ENCODE measurements at regions of chr17 and their contacts with region 1.

Region 1: GRCh38 chr17:4709794-4710692 is at the start of gene ARRB2:
- DNase-seq: peak; percentile 97 to 99
- ATAC-seq: peak; percentile 94 to 97 (median 95)
- H3K4me3 ChIP-seq: peak within 1 kb of the TSS; percentile 12 to 85 (median 72)
- H3K27ac ChIP-seq: peak within 1 kb of the TSS in 9 of 10 donors; percentile 53 to 99 (median 80)
- H3K4me1 ChIP-seq: peaks cover 4 to 47% (median 13%) of the 10 kb centered on the region in 9 donors
- H3K27me3 ChIP-seq: no peaks in the 10 kb centered on the region
- CTCF ChIP-seq: peak; percentile 41 to 79 (median 57)
- total RNA-seq, gene ARRB2: 10.8 to 53.5 (median 17.2) TPM

Region 2: GRCh38 chr17:4648741-4649140 is 61.3 kb before region 1 on chr17:
- intact Hi-C with region 1: no loop called
- DNase-seq: no peak
- ATAC-seq: no peak
- H3K4me3 ChIP-seq: no peak overlapping the region
- H3K27ac ChIP-seq: no peak overlapping the region
- H3K4me1 ChIP-seq: peaks cover 0 to 13% (median 0%) of the 10 kb centered on the region in 9 donors
- H3K27me3 ChIP-seq: peaks cover 0 to 42% (median 23%) of the 10 kb centered on the region in 7 donors
- CTCF ChIP-seq: no peak

Region 3: GRCh38 chr17:4733073-4733531 is 23.1 kb after region 1 on chr17:
- intact Hi-C with region 1: loop called in 1 of 10 experiments (anchors 1 kb)
- DNase-seq: no peak
- ATAC-seq: no peak
- H3K4me3 ChIP-seq: no peak overlapping the region
- H3K27ac ChIP-seq: peak overlapping the region in 5 of 10 donors; percentile 15 to 90 (median 39)
- H3K4me1 ChIP-seq: peaks cover 3 to 66% (median 15%) of the 10 kb centered on the region in 9 donors
- H3K27me3 ChIP-seq: peaks cover 0 to 10% (median 0%) of the 10 kb centered on the region in 7 donors
- CTCF ChIP-seq: peak in 2 of 9 donors; percentile 28 to 35

Region 4: GRCh38 chr17:4903051-4903818 is 193.2 kb after region 1 on chr17 and contains the start of gene CHRNE:
- intact Hi-C with region 1: loop called in 2 of 10 experiments (anchors 5 to 10 kb)
- DNase-seq: peak in 1 of 2 donors; percentile 81
- ATAC-seq: peak in 3 of 8 donors; percentile 29 to 40 (median 37)
- H3K4me3 ChIP-seq: peak within 1 kb of the TSS in 4 of 10 donors; percentile 13 to 53 (median 20)
- H3K27ac ChIP-seq: peak within 1 kb of the TSS in 9 of 10 donors; percentile 25 to 71 (median 59)
- H3K4me1 ChIP-seq: peaks cover 0 to 49% (median 34%) of the 10 kb centered on the region in 9 donors
- H3K27me3 ChIP-seq: peaks cover 0 to 36% (median 21%) of the 10 kb centered on the region in 7 donors
- CTCF ChIP-seq: peak; percentile 50 to 88 (median 77)
- total RNA-seq, gene CHRNE: 0.19 to 1.6 (median 0.53) TPM

Region 5: GRCh38 chr17:4956493-4957061 is 246.5 kb after region 1 on chr17:
- intact Hi-C with region 1: no loop called
- DNase-seq: no peak
- ATAC-seq: no peak
- H3K4me3 ChIP-seq: no peak overlapping the region
- H3K27ac ChIP-seq: no peak overlapping the region
- H3K4me1 ChIP-seq: peaks cover 0 to 48% (median 0%) of the 10 kb centered on the region in 9 donors
- H3K27me3 ChIP-seq: no peaks in the 10 kb centered on the region
- CTCF ChIP-seq: peak in 6 of 9 donors; percentile 21 to 45 (median 32)